GM18951 (cell line): ENCODE measurements at regions of chrX and their contacts with region 1.

Region 1: GRCh38 chrX:46637937-46638336 is 64.4 kb downstream of the CHST7 start:
- POLR2A ChIP-seq: no peak

Region 2: DNA sequence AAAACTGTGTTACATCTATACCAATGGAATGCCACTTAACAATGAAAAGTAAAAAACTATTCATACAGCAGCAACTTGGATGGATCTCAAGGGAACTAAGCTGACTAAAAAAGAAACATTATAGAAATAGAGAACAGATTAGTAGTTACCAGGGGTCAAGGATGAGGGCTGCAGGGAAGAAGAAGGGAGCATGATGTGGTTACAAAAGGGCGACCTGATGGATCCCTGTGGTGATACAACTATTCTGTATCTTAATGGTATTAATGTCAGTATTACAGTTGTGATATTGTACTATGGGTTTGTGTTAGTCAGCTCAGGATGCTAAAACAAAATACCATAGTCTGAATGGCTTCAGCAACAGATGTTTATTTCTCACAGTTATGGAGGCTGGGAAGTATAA is 283.5 kb before region 1 on chrX:
- in situ Hi-C with region 1: no loop called
- POLR2A ChIP-seq: no peak

Region 3: GRCh38 chrX:47863187-47863586 is 1225.2 kb after region 1 on chrX:
- in situ Hi-C with region 1: loop called (anchors 10 kb)
- POLR2A ChIP-seq: no peak